ENCODE measurements at regions of chr3 and their contacts with region 1.

Region 1: DNA sequence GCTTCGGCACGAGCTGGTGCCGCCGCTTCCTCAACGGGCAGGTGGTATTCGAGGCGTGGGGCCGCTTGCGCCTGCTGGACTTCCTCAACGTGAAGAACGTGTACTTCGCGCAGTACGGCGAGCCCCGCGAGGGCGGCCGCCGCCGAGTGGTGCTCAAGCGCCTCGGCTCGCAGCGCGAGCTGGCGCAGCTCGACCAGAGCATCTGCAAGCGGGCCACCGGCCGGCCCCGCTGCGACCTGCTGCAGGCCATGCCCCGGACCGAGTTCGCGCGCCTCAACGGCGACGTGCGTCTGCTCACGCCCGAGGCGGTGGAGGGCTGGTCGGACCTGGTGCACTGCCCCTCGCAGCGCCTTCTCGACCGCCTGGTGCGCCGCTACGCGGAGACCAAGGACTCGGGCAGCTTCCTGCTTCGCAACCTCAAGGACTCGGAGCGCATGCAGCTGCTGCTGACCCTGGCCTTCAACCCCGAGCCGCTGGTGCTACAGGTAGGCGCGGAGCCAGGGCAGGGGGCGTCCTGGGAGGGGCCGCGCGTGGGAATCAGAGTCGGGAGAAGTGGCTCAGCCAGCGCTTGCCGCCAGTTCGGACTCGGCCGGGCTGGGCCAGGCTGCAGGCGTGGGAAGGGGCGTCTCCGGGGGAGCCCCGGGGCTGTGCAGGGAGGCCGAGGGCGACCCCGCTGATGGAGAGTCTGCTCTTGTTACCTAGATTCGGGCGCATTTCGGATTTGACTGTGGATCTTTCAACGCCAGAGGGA is 1.1 kb downstream of the DIPK2A start:
- DNase-seq: peak; percentile 57
- H3K4me3 Mint-ChIP-seq: peak overlapping the region; percentile 97
- H3K27ac Mint-ChIP-seq: peak overlapping the region; percentile 85
- H3K4me1 Mint-ChIP-seq: peaks cover 26% of the 10 kb centered on the region
- H3K27me3 Mint-ChIP-seq: peaks cover 21% of the 10 kb centered on the region

Region 2: GRCh38 chr3:142595951-142596725 is 1376.5 kb before region 1 on chr3 and contains the start of gene PLS1:
- intact Hi-C with region 1: loop called (anchors 10 kb)
- DNase-seq: peak; percentile 87
- H3K4me3 Mint-ChIP-seq: peak within 1 kb of the TSS; percentile 95
- H3K27ac Mint-ChIP-seq: peak within 1 kb of the TSS; percentile 83
- H3K4me1 Mint-ChIP-seq: peaks cover 17% of the 10 kb centered on the region
- H3K27me3 Mint-ChIP-seq: no peaks in the 10 kb centered on the region
- total RNA-seq, gene PLS1: 6.2 and 6.8 TPM in 2 replicates

Region 3: GRCh38 chr3:143001369-143002082 is 971.2 kb before region 1 on chr3 and contains the start of gene U2SURP:
- intact Hi-C with region 1: loop called (anchors 1 kb)
- DNase-seq: peak; percentile 91
- H3K4me3 Mint-ChIP-seq: peak within 1 kb of the TSS; percentile 94
- H3K27ac Mint-ChIP-seq: peak within 1 kb of the TSS; percentile 96
- H3K4me1 Mint-ChIP-seq: peaks cover 22% of the 10 kb centered on the region
- H3K27me3 Mint-ChIP-seq: peaks cover 3% of the 10 kb centered on the region
- total RNA-seq, gene U2SURP: 176 TPM in 2 replicates

Region 4: DNA sequence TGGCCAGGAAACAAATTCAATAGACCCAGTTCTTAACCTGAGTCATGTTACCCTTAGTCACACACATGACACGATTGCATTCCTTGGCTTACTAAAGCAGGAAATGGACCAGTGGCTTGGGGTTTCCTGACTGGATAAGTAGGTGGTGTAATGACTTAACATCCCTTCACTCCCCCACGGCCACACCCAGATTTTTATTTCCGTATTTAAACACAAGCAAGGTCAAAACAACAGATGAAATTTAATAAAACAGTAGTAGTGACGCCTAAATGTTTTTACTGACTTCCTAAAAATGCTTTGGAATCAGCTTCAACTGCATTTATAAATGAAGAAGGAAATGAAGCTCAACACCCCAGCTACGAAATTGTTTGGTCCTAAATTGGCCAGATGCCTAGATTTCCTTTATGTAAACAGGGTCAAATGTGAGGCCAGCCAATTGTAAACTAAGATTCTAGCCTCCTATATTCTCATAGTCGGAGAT is 528.8 kb before region 1 on chr3:
- intact Hi-C with region 1: loop called (anchors 10 kb)
- DNase-seq: no peak
- H3K4me3 Mint-ChIP-seq: peak overlapping the region; percentile 11
- H3K27ac Mint-ChIP-seq: no peak overlapping the region
- H3K4me1 Mint-ChIP-seq: peaks cover 29% of the 10 kb centered on the region
- H3K27me3 Mint-ChIP-seq: peaks cover 5% of the 10 kb centered on the region

Region 5: GRCh38 chr3:143847787-143848631 is 124.7 kb before region 1 on chr3 and contains the start of gene SLC9A9:
- intact Hi-C with region 1: loop called (anchors 1 kb)
- DNase-seq: no peak
- H3K4me3 Mint-ChIP-seq: peak within 1 kb of the TSS; percentile 90
- H3K27ac Mint-ChIP-seq: peak within 1 kb of the TSS; percentile 83
- H3K4me1 Mint-ChIP-seq: peaks cover 47% of the 10 kb centered on the region
- H3K27me3 Mint-ChIP-seq: peaks cover 16% of the 10 kb centered on the region
- total RNA-seq, gene SLC9A9: 1.6 and 2.0 TPM in 2 replicates

Region 6: GRCh38 chr3:143914257-143914656 is 58.4 kb before region 1 on chr3:
- intact Hi-C with region 1: no loop called
- DNase-seq: no peak
- H3K4me3 Mint-ChIP-seq: no peak overlapping the region
- H3K27ac Mint-ChIP-seq: no peak overlapping the region
- H3K4me1 Mint-ChIP-seq: no peaks in the 10 kb centered on the region
- H3K27me3 Mint-ChIP-seq: peaks cover 23% of the 10 kb centered on the region

Region 7: GRCh38 chr3:144010371-144010770 is 37.7 kb after region 1 on chr3:
- intact Hi-C with region 1: no loop called
- DNase-seq: no peak
- H3K4me3 Mint-ChIP-seq: no peak overlapping the region
- H3K27ac Mint-ChIP-seq: no peak overlapping the region
- H3K4me1 Mint-ChIP-seq: no peaks in the 10 kb centered on the region
- H3K27me3 Mint-ChIP-seq: peaks cover 6% of the 10 kb centered on the region